ENCODE measurements at regions of chr5 and their contacts with region 1.

Region 1: DNA sequence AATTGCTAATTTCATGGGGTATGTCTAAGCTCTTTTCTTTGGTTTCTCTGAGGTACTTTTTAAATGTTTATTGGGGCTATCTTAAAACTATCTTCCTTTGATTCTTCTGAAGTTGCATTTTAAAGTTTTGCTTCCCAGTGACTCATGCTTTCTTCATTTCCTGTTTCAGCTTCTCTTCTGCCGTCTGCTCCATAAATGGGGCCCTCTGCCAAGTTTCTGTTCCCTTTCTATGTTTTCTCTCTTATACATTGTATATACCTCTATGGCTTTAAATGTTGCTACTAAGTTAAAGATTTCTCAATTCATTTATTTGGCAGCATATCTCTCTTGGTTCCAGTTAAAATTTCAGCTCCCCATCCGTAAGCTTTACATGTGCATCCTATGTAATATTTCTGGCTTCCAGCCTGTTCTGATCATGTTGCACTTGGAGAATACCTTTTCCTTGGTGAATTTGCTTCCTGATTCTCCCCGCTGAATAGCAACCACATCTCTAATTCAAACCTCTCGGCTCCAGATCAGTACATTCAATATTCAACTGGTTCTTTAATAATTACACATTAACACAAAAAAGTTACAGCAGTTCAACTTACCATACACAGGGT is 125.3 kb downstream of the ST8SIA4 start:
- DNase-seq: peak in 1 of 2 experiments; percentile 42
- ATAC-seq: peak; percentile 39 to 53; a peak in 3 of 6 replicates
- H3K4me3 ChIP-seq: no peak overlapping the region
- H3K27ac ChIP-seq: peak overlapping the region; percentile 55 to 62; a peak in 5 of 6 replicates
- H3K4me1 ChIP-seq: peaks cover 11% of the 10 kb centered on the region
- CTCF ChIP-seq: no peak
- EP300 ChIP-seq: no peak
- POLR2A ChIP-seq: no peak
- RAD21 ChIP-seq: no peak

Region 2: GRCh38 chr5:100762108-100762507 is 15.7 kb before region 1 on chr5:
- CTCF ChIA-PET with region 1: interaction called, 15 read pairs
- POLR2A ChIA-PET with region 1: no interaction called
- DNase-seq: no peak
- ATAC-seq: no peak
- H3K4me3 ChIP-seq: no peak overlapping the region
- H3K27ac ChIP-seq: no peak overlapping the region
- H3K4me1 ChIP-seq: 0 out of 3 replicates have a peak, but pooled peaks cover 6% of the 10 kb centered on the region
- CTCF ChIP-seq: no peak
- EP300 ChIP-seq: no peak
- POLR2A ChIP-seq: no peak
- RAD21 ChIP-seq: no peak

Region 3: DNA sequence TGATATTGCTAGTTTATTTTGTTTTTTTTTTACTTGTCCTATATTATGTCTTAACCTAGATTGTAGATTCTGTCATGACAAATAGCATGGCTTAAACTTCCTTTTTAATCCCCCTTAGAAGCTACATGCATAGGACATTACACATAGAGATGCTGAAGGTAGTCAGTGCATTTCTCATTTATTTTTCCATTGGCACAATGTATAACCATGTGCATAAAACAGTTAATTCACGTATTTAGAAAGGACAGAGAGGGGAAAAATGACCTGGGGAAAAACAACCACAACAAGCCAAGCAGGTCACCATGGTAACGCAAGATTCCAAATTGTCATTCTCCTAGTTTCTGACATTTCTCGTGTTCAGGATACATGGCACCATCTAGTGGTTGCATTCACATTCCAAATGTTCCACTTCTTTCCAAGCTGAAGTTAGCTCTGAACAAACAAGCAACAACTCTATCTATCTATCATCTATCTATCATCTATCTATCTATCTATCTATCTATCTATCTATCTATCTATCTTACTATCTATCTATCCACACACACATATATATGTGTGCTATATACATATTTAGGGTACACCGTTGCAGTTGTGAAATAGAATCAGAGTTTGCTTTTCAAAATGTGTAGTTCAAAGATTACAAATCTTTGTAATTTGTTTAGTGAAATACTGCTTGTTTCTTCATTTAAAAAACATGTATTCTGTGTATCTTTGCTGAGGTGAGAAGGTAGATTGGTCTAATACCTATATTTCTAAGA is 612.5 kb after region 1 on chr5:
- CTCF ChIA-PET with region 1: interaction called, 12 read pairs
- POLR2A ChIA-PET with region 1: no interaction called
- DNase-seq: peak in 1 of 2 experiments; percentile 80
- ATAC-seq: peak; percentile 73 to 85; a peak in 5 of 6 replicates
- H3K4me3 ChIP-seq: no peak overlapping the region
- H3K27ac ChIP-seq: no peak overlapping the region
- H3K4me1 ChIP-seq: no peaks in the 10 kb centered on the region
- CTCF ChIP-seq: peak; percentile 80
- EP300 ChIP-seq: no peak
- POLR2A ChIP-seq: no peak
- RAD21 ChIP-seq: peak; percentile 86 to 88

Measured in A549 (cell line).